ENCODE measurements at regions of chrX and their contacts with region 1.

Region 1: GRCh38 chrX:130024127-130024526 is 41.7 kb downstream of the BCORL1 start:
- DNase-seq: peak; percentile 56 to 80
- H3K4me3 ChIP-seq: no peak overlapping the region
- H3K27ac ChIP-seq: no peak overlapping the region
- H3K4me1 ChIP-seq: peaks cover 0 to 5% (median 1%) of the 10 kb centered on the region in 4 experiments; a peak in 3 of 7 replicates
- H3K27me3 ChIP-seq: no peaks in the 10 kb centered on the region
- CTCF ChIP-seq: no peak
- EP300 ChIP-seq: no peak
- POLR2A ChIP-seq: no peak
- RAD21 ChIP-seq: no peak

Region 2: DNA sequence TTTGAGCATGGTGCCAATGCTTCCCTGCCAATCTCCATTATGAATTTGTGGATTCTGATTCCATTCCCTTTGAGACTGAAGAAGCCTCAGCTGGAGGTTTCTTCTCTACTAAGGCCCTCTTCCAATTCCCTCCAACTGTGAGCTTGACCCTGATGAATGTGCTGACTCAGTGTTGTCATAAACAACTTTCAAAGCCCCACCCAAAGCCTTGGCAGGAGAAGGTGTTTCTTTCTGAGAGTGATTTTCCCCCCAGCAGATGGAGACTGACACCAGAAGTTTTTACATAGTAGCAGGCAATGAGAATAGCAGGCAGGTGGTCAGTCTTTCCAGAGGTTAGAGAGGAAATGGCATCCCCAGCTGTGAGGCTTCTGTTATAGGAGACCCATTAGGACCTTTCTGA is 431.0 kb before region 1 on chrX:
- CTCF ChIA-PET with region 1: no interaction called
- POLR2A ChIA-PET with region 1: no interaction called
- DNase-seq: no peak
- H3K4me3 ChIP-seq: no peak overlapping the region
- H3K27ac ChIP-seq: no peak overlapping the region
- H3K4me1 ChIP-seq: no peaks in the 10 kb centered on the region
- H3K27me3 ChIP-seq: no peaks in the 10 kb centered on the region
- CTCF ChIP-seq: no peak
- EP300 ChIP-seq: no peak
- POLR2A ChIP-seq: no peak
- RAD21 ChIP-seq: no peak

Region 3: GRCh38 chrX:129985526-129985925 is 38.6 kb before region 1 on chrX:
- CTCF ChIA-PET with region 1: no interaction called
- POLR2A ChIA-PET with region 1: no interaction called
- DNase-seq: no peak
- H3K4me3 ChIP-seq: no peak overlapping the region
- H3K27ac ChIP-seq: no peak overlapping the region
- H3K4me1 ChIP-seq: peaks cover 0 to 5% (median 1%) of the 10 kb centered on the region in 4 experiments; a peak in 1 of 7 replicates
- H3K27me3 ChIP-seq: peaks cover 2 to 21% (median 16%) of the 10 kb centered on the region in 4 experiments
- CTCF ChIP-seq: no peak
- EP300 ChIP-seq: no peak
- POLR2A ChIP-seq: no peak
- RAD21 ChIP-seq: no peak

Region 4: GRCh38 chrX:130009658-130010223 is 14.4 kb before region 1 on chrX:
- CTCF ChIA-PET with region 1: interaction called, 28 read pairs
- POLR2A ChIA-PET with region 1: interaction called, 4 read pairs
- DNase-seq: no peak
- H3K4me3 ChIP-seq: no peak overlapping the region
- H3K27ac ChIP-seq: no peak overlapping the region
- H3K4me1 ChIP-seq: no peaks in the 10 kb centered on the region; a peak in 1 of 7 replicates
- H3K27me3 ChIP-seq: no peaks in the 10 kb centered on the region
- CTCF ChIP-seq: no peak
- EP300 ChIP-seq: no peak
- POLR2A ChIP-seq: no peak
- RAD21 ChIP-seq: no peak

Region 5: DNA sequence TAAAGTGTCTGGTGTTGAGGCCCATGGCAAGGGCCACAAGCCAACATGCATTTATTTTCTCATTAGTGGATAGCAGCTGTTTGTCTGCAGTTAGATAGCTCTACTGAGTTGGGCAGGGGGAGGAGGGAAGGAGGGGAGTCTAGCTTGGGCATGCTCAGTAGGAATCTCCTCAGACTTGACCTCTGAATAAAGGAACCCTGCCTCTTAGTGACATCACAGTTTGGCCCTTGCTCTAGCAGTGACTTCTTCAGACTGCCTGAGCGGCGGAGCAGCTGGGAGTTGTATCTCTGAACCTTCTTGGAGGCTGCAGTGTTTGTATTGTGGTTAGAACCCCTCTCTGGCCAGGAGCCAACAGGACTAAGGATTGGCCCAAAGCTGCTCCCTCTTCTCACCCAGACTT is 15.7 kb after region 1 on chrX:
- CTCF ChIA-PET with region 1: interaction called, 77 read pairs
- POLR2A ChIA-PET with region 1: no interaction called
- DNase-seq: no peak
- H3K4me3 ChIP-seq: no peak overlapping the region
- H3K27ac ChIP-seq: no peak overlapping the region
- H3K4me1 ChIP-seq: no peaks in the 10 kb centered on the region
- H3K27me3 ChIP-seq: no peaks in the 10 kb centered on the region
- CTCF ChIP-seq: no peak
- EP300 ChIP-seq: no peak
- POLR2A ChIP-seq: no peak
- RAD21 ChIP-seq: no peak

Region 6: GRCh38 chrX:130060122-130061069 is 36.3 kb after region 1 on chrX:
- CTCF ChIA-PET with region 1: interaction called, 23 read pairs
- POLR2A ChIA-PET with region 1: interaction called, 3 read pairs
- DNase-seq: peak in 1 of 2 experiments; percentile 95
- H3K4me3 ChIP-seq: peak overlapping the region; percentile 17 to 58 (median 22); a peak in 6 of 8 replicates
- H3K27ac ChIP-seq: no peak overlapping the region
- H3K4me1 ChIP-seq: peaks cover 0 to 13% (median 2%) of the 10 kb centered on the region in 4 experiments; a peak in 6 of 7 replicates
- H3K27me3 ChIP-seq: peaks cover 4 to 28% (median 21%) of the 10 kb centered on the region in 4 experiments
- CTCF ChIP-seq: peak; percentile 70 to 78 (median 71)
- EP300 ChIP-seq: no peak
- POLR2A ChIP-seq: no peak
- RAD21 ChIP-seq: peak; percentile 72 to 84

Region 7: GRCh38 chrX:130186651-130187050 is 162.5 kb after region 1 on chrX:
- CTCF ChIA-PET with region 1: no interaction called
- POLR2A ChIA-PET with region 1: no interaction called
- DNase-seq: no peak
- H3K4me3 ChIP-seq: no peak overlapping the region
- H3K27ac ChIP-seq: no peak overlapping the region
- H3K4me1 ChIP-seq: no peaks in the 10 kb centered on the region
- H3K27me3 ChIP-seq: no peaks in the 10 kb centered on the region
- CTCF ChIP-seq: no peak
- EP300 ChIP-seq: no peak
- POLR2A ChIP-seq: no peak
- RAD21 ChIP-seq: no peak

Measured in H1 (cell line).